ENCODE measurements at regions of chr1 and their contacts with region 1.

Region 1: GRCh38 chr1:66271216-66271903 is 262.6 kb upstream of the SGIP1 start:
- DNase-seq: peak; percentile 88
- ATAC-seq: peak; percentile 89

Region 2: DNA sequence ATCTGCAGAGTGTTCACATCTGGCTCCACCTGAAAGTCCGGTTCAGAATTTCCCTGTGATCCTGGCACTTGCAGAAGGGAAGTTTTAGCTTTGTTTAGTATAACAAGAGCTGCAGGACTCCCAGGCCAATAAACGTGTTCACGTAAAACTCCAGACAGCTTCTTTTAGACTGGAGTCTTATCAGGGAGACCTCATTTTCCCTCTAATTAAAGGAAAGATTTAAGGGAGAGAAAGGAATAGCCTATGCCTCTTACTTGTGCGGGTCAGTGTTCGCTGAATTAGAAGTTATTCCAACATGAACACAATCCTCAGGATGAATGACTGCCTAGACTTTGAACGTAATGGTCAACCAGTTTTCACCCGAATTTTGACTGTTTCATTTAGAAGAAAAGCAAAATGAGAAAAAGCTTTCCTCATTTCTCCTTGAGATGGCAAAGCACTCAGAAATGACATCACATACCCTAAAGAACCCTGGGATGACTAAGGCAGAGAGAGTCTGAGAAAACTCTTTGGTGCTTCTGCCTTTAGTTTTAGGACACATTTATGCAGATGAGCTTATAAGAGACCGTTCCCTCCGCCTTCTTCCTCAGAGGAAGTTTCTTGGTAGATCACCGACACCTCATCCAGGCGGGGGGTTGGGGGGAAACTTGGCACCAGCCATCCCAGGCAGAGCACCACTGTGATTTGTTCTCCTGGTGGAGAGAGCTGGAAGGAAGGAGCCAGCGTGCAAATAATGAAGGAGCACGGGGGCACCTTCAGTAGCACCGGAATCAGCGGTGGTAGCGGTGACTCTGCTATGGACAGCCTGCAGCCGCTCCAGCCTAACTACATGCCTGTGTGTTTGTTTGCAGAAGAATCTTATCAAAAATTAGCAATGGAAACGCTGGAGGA is 60.5 kb after region 1 on chr1:
- intact Hi-C with region 1: loop called (anchors 1 kb)
- DNase-seq: peak; percentile 80
- ATAC-seq: peak; percentile 70

Region 3: DNA sequence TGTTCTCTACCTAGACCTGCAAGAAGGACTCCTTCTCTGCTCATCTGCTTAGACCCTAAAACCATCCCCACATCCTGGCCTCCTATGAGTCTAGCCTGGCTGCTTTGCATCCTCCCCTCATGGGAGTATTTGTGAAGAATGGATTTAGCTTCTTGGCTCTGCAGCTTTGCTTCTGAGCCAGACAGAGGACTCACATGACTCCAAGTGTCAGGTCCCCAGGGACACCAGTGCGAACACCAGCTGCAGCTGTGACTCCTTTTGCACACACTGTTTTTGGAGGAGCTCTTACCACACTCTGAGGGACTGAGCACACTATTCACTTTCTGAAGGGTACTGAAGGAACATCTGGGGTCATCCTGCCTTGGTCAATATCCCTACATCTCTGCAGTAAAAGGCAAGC is 130.8 kb after region 1 on chr1:
- intact Hi-C with region 1: loop called (anchors 2 kb)
- DNase-seq: peak; percentile 79
- ATAC-seq: peak; percentile 98

Measured in Right ventricle myocardium inferior (tissue), 1 donor.